ENCODE measurements at regions of chr10 and their contacts with region 1.

Region 1: DNA sequence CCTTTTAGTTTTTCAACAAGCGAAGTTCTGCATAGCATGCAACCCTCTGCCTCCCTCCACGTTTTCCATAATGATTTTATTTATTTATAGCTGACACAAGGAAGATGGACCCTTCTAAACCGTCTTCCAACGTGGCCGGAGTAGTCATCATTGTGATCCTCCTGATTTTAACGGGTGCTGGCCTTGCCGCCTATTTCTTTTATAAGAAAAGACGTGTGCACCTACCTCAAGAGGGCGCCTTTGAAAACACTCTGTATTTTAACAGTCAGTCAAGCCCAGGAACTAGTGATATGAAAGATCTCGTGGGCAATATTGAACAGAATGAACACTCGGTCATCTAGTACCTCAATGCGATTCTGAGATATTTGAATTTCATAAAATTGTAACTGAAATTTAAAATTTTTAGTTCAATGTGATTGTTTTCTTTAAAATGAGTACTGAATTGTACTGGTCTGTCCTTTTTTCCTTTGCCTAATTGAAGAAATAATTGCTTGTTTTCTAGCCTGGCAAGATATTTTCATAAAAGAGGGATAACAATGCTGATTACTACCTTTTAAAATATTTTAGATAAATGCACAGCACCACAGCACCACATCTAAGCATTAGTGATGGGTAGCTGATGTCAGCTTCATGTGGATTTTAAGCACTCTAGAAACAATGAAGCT is 41.5 kb upstream of the SLC39A12 start:
- DNase-seq: peak; percentile 42
- H3K4me3 ChIP-seq: no peak overlapping the region
- H3K27ac ChIP-seq: no peak overlapping the region
- H3K4me1 ChIP-seq: no peaks in the 10 kb centered on the region
- H3K27me3 ChIP-seq: no peaks in the 10 kb centered on the region
- CTCF ChIP-seq: peak; percentile 14 to 48 (median 38)
- POLR2A ChIP-seq: no peak

Region 2: DNA sequence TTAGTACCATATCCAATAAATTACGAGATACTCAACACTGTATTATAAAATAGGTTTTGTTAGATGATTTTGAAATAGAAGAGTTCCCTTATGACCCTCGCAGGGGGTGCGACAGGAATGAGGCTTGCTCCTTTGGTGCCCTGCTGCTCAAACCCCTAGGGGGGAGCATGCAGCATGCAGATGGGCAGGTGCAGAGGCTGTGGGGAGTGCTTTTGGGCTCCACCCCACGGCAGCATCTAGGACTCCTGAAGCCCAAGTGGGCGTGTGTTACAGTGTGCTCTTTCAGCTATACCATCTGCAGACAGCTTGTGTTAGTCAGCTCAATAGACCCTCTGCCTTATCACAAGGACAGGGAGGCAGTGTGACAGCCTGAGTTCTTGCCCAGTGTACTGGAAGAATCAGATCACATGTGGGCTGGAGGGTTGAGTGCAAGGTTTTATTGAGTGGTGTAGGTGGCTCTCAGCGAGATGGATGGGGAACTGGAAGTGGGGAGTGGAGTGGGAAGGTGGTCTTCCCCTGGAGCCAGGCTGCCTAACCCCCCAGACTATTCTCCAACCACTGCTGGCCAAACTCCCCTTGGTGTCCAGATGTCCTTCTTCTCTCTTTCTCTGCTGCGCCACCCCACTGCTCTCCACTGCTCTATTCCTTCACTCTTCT is 104.2 kb before region 1 on chr10:
- intact Hi-C with region 1: no loop called
- DNase-seq: no peak
- H3K4me3 ChIP-seq: no peak overlapping the region
- H3K27ac ChIP-seq: no peak overlapping the region
- H3K4me1 ChIP-seq: no peaks in the 10 kb centered on the region
- H3K27me3 ChIP-seq: no peaks in the 10 kb centered on the region
- CTCF ChIP-seq: no peak
- POLR2A ChIP-seq: no peak

Region 3: DNA sequence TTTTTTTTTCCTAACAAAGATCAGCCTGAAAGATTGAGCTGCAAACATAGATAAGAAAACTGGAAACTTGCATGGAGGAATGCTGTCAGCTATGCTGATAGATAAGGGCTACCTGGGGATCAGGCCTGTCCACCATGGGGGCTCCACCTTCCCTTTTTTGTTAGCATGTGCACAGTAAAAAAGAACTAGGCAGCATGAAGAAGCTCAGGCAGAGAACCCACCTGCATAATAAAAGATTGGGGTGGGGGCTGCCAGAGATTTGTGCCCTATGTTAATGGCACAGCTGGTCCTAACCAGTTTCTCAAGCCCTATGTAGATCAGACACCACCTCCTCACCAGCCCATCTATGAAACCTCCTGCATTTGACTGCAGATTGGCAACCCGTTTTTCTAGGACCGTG is 184.5 kb after region 1 on chr10:
- intact Hi-C with region 1: loop called (anchors 5 kb)
- DNase-seq: no peak
- H3K4me3 ChIP-seq: no peak overlapping the region
- H3K27ac ChIP-seq: no peak overlapping the region
- H3K4me1 ChIP-seq: no peaks in the 10 kb centered on the region
- H3K27me3 ChIP-seq: no peaks in the 10 kb centered on the region
- CTCF ChIP-seq: no peak
- POLR2A ChIP-seq: no peak

Region 4: DNA sequence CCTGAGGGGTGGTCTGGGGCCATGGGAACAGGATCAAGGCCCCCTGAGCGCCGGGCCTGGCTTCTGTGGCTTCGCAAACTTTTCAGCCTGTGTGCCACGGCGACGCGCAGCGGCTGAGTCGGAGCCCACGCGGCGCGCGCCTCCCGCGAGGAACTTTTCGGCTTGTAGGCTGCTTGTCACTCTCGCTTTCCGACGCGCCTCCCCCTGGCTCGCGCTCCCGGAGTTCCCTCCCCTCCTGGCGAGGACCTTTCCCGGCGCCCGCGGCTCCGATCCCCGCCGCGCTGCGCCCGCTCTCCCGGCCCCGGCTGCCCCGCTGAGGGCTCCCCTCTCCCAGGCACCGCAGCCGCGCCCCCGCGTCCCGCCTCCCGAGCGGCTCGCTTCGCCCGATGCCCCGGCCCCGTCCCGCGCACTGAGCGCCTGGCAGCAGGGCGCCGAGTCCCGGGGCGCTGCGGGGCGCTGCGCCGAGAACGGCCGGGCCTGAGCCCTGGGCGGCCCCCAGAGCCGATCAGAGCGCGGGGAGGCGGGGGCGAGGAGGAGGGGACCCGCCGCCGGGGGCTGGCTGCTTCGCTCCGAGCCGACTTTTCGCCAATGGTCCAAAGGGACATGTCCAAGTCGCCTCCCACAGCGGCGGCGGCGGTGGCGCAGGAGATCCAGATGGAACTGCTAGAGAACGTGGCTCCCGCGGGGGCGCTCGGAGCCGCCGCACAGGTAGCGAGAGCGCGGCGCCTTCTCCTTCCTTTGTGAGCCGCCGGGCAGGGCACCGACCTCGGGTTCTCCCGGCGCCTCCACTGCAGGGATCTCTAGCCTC is 230.1 kb after region 1 on chr10 and contains the start of gene CACNB2:
- intact Hi-C with region 1: loop called (anchors 5 kb)
- DNase-seq: peak; percentile 60
- H3K4me3 ChIP-seq: peak within 1 kb of the TSS; percentile 57 to 59
- H3K27ac ChIP-seq: peak within 1 kb of the TSS; percentile 82 to 88
- H3K4me1 ChIP-seq: no peaks in the 10 kb centered on the region
- H3K27me3 ChIP-seq: no peaks in the 10 kb centered on the region
- CTCF ChIP-seq: no peak
- POLR2A ChIP-seq: no peak
- total RNA-seq, gene CACNB2: 5.5 to 17.4 TPM

Region 5: GRCh38 chr10:18214691-18215563 is 304.7 kb after region 1 on chr10:
- intact Hi-C with region 1: loop called (anchors 5 kb)
- DNase-seq: peak; percentile 33
- H3K4me3 ChIP-seq: no peak overlapping the region
- H3K27ac ChIP-seq: no peak overlapping the region
- H3K4me1 ChIP-seq: no peaks in the 10 kb centered on the region
- H3K27me3 ChIP-seq: no peaks in the 10 kb centered on the region
- CTCF ChIP-seq: peak in 3 of 4 experiments; percentile 51 to 68 (median 63)
- POLR2A ChIP-seq: no peak

Region 6: DNA sequence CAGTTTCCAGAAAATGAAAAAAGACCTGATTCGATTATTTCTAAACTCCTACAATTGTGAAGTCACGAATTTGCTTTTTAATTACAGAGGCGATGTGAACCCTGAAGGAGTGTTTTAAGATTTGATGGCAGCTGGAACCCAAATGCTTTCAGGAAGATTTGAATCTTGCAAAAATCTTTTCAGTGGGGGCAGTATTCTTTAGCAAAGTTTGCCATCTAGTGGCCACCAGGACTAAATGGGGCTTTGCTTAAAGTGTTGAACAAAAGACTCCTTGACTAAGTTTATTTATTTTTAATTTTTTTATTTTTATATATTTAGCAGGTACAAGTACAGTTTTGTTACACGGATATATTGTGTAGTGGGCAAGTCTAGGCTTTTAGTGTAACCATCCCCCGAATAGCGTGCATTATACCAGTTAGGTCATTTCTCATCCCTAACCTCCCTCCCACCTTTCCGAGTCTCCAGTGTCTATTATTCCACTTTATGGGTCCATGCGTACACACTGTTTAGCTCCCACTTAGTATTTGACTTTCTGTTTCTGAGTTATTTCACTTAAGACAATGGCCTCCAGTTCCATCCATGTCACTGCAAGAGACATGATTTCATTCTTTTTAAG is 328.7 kb after region 1 on chr10:
- intact Hi-C with region 1: loop called (anchors 5 kb)
- DNase-seq: no peak
- H3K4me3 ChIP-seq: no peak overlapping the region
- H3K27ac ChIP-seq: no peak overlapping the region
- H3K4me1 ChIP-seq: no peaks in the 10 kb centered on the region
- H3K27me3 ChIP-seq: no peaks in the 10 kb centered on the region
- CTCF ChIP-seq: peak; percentile 16 to 59 (median 48)
- POLR2A ChIP-seq: no peak

Region 7: DNA sequence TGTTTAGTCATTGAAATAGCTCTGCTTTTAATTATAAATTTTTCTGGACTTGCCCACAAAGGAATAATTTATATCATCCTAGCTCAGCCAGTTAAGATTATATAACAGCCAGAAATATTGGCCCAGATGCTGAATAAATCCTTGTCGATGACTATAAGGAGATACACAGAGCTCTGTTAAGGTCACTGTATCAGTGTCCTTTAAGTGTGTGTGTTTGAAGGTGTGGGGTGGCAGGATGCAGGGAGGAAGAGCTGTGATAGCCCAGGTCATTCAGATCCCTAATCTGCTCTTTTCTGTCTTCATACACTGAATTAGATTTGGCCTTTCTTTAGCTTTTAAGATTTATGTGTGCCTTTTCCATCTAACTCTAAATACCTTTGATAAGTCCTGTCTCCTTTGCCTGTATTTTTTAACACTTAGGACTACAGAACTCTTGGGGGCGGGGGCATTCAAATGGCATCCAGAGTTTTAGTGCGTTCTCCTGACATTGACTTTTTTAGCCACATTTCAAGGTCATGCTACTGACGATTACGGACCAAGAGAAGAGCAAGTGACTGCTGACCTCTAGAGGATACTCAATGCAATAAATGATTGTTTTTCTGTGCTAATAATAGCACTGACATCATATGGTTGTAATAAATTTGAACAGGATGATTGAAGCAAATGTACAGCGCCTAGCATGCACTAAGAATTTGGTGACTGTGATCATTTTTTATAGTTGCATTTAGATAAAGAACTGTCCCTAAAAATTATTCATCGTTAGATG is 402.3 kb after region 1 on chr10:
- intact Hi-C with region 1: loop called (anchors 5 kb)
- DNase-seq: no peak
- H3K4me3 ChIP-seq: no peak overlapping the region
- H3K27ac ChIP-seq: no peak overlapping the region
- H3K4me1 ChIP-seq: no peaks in the 10 kb centered on the region
- H3K27me3 ChIP-seq: no peaks in the 10 kb centered on the region
- CTCF ChIP-seq: peak in 3 of 4 experiments; percentile 20 to 40 (median 22)
- POLR2A ChIP-seq: no peak

Measured in prostate gland (tissue), 2 donors.